ENCODE measurements at regions of chr19 and their contacts with region 1.

Region 1: DNA sequence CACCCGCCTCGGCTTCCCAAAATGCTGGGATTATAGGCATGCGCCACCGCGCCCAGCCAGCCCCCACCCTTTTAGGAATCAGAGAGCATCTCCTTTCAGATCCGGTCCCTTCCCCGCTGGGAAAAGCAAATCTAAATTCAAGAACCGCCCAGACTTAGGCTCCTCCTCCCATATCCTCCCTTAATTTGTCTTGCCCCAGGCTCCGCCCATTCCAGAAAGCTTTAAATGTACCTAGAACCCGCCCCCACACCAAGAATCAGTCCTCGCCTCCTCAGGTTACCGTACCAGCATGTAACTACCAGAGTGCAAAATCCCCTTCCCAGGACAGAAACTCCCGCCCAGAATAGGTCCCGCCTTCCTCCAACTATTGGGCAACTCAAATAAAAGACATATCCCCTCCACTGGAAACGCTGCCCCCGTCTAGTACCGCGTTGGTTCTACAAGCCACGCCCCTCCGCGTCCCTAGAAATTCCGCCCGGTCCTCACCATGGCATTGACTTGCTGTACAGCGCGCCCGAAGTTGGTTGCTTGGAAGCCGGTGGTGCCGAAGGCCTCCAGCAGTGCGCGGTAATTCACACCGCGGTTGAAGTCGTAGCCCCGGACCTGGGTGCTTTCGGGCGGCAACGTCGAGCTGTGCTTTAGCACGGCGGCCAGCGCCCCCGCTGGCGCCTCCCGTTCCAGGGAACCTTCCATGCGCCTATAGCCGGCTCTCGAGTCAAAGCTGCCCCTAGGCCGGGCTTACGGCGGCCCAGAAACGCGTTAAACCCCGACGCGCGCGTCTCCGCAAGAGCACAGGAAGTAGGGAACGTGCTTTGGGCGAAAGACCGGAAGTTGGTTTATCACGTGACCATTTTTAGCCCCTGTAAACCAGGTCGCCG is at the start of gene DHPS:
- DNase-seq: peak; percentile 90
- H3K4me3 ChIP-seq: peak within 1 kb of the TSS; percentile 76 to 94
- H3K27ac ChIP-seq: peak within 1 kb of the TSS; percentile 96 to 100
- H3K4me1 ChIP-seq: peaks cover 0 to 4% of the 10 kb centered on the region in 2 experiments; a peak in 1 of 4 replicates
- H3K27me3 ChIP-seq: no peaks in the 10 kb centered on the region
- CTCF ChIP-seq: 0 out of 2 replicates have a peak, but pooled peaks have one; percentile 12
- EP300 ChIP-seq: 0 out of 4 replicates have a peak, but pooled peaks of 1 of the 2 experiments have one; percentile 12
- RAD21 ChIP-seq: no peak
- polyA plus RNA-seq, gene DHPS: 179 and 192 TPM in 2 replicates

Region 2: DNA sequence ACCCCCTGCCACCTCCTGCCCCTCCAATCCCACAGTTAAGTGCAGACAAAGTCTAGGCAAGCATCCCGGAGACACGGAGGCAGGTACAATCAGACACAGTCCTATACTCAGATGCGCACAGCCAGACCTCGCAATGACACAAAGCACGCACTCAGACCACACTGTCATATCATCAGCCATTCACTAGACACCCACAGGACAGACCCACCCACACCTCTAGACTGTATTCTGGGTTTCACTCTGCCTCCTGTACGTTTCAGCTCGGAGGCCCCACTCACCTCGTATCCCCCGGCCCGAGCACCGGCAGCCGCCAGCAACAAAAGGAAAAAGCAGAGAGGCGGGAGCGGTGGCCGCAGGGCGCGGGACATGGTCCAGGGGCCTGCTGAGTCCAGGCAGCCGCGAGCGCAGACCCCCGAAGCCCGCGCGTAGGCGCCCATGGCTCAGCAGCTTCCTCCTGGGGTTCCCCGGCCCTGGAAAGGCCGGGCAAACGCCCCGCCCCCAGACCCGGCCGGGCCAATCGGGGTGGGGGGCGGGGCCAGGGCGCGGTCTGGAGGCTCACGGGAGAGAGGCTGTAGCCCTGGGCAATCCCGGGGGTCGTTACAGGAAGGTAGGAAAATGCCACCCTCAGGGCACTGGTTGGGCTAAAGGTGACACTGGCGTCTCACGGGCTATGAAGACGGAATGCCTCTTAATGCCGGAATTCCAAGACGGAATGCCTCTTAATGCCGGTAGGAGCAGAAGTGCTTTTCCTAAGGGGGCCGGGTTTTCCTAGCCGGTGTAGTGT is 14.9 kb before region 1 on chr19 and contains the starts of genes MAN2B1 and WDR83:
- CTCF ChIA-PET with region 1: interaction called, 21 read pairs
- POLR2A ChIA-PET with region 1: interaction called, 6 read pairs
- DNase-seq: peak; percentile 98
- H3K4me3 ChIP-seq: peak within 1 kb of the TSS; percentile 71 to 94
- H3K27ac ChIP-seq: peak within 1 kb of the TSS; percentile 8 to 60; a peak in 1 of 4 replicates
- H3K4me1 ChIP-seq: peaks cover 5 to 35% of the 10 kb centered on the region in 2 experiments; a peak in 2 of 4 replicates
- H3K27me3 ChIP-seq: no peaks in the 10 kb centered on the region
- CTCF ChIP-seq: no peak
- EP300 ChIP-seq: no peak
- RAD21 ChIP-seq: no peak
- polyA plus RNA-seq, gene MAN2B1: 43.2 and 47.0 TPM in 2 replicates
- polyA plus RNA-seq, gene WDR83: 12.8 and 18.2 TPM in 2 replicates

Region 3: GRCh38 chr19:12696366-12697335 is 15.3 kb after region 1 on chr19 and contains the start of gene FBXW9:
- CTCF ChIA-PET with region 1: interaction called, 11 read pairs
- POLR2A ChIA-PET with region 1: interaction called, 5 read pairs
- DNase-seq: peak; percentile 97
- H3K4me3 ChIP-seq: peak within 1 kb of the TSS; percentile 81 to 89
- H3K27ac ChIP-seq: peak within 1 kb of the TSS; percentile 81 to 83
- H3K4me1 ChIP-seq: peaks cover 0 to 16% of the 10 kb centered on the region in 2 experiments; a peak in 2 of 4 replicates
- H3K27me3 ChIP-seq: no peaks in the 10 kb centered on the region
- CTCF ChIP-seq: no peak
- EP300 ChIP-seq: no peak
- RAD21 ChIP-seq: no peak
- polyA plus RNA-seq, gene FBXW9: 25.9 and 26.6 TPM in 2 replicates

Region 4: GRCh38 chr19:12733369-12734176 is 52.3 kb after region 1 on chr19:
- CTCF ChIA-PET with region 1: no interaction called
- POLR2A ChIA-PET with region 1: no interaction called
- DNase-seq: peak; percentile 76
- H3K4me3 ChIP-seq: peak overlapping the region; percentile 87 to 90
- H3K27ac ChIP-seq: peak overlapping the region; percentile 84 to 89
- H3K4me1 ChIP-seq: peaks cover 11 to 29% of the 10 kb centered on the region in 2 experiments; a peak in 1 of 4 replicates
- H3K27me3 ChIP-seq: no peaks in the 10 kb centered on the region
- CTCF ChIP-seq: peak; percentile 54
- EP300 ChIP-seq: no peak
- RAD21 ChIP-seq: no peak

Region 5: DNA sequence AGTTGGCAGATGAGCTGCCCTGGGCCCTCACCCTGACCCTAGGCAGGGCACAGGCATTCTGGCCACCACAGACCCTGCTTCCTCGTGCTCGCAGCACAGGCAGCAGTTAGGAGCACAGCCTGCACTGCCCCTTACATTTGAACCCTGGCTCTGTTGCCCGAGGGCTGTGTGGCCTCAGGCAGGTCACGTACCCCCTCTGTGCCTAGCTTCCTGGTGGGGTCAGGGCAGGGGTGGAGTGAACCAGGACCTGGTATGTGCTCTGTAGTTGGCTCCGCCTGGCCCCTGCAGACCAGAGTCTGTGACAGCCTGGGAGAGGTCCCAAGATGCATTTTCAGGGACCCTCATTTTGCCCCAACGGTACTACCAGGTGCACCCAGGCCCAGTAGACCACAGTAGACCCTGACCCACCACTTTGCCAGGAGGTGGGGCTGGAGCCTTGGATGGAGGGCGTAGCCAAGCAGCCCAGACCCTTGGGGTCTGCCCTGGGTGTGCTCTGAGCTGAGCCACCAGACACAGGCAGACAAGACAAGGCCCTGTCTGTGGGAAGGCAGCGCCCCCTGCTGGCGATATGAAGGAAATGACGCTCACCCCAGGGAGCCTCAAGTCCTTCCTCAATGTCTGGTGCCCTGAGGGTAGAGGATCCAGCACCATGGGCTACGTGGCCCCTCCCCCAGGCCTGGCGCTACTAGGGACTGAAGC is 412.2 kb after region 1 on chr19:
- CTCF ChIA-PET with region 1: no interaction called
- POLR2A ChIA-PET with region 1: no interaction called
- DNase-seq: peak; percentile 92
- H3K4me3 ChIP-seq: no peak overlapping the region; a peak in 1 of 4 replicates
- H3K27ac ChIP-seq: peak overlapping the region; percentile 27 to 99; a peak in 3 of 4 replicates
- H3K4me1 ChIP-seq: peaks cover 19 to 76% of the 10 kb centered on the region in 2 experiments
- H3K27me3 ChIP-seq: no peaks in the 10 kb centered on the region
- CTCF ChIP-seq: peak; percentile 88
- EP300 ChIP-seq: no peak
- RAD21 ChIP-seq: peak; percentile 98

Measured in SK-N-SH (cell line).